ENCODE measurements at regions of chr22 and their contacts with region 1.

Region 1: GRCh38 chr22:22855617-22856308 is 31.9 kb upstream of the IGLL5 start:
- H3K4me3 ChIP-seq: no peak overlapping the region
- H3K27ac ChIP-seq: no peak overlapping the region
- H3K4me1 ChIP-seq: no peaks in the 10 kb centered on the region
- CTCF ChIP-seq: peak; percentile 77

Region 2: GRCh38 chr22:22552630-22553029 is 303.1 kb before region 1 on chr22:
- CTCF ChIA-PET with region 1: no interaction called
- POLR2A ChIA-PET with region 1: no interaction called
- H3K4me3 ChIP-seq: no peak overlapping the region
- H3K27ac ChIP-seq: no peak overlapping the region
- H3K4me1 ChIP-seq: no peaks in the 10 kb centered on the region
- CTCF ChIP-seq: peak; percentile 36; the same call in 1 of the 2 replicates

Region 3: GRCh38 chr22:22871516-22872278 is 15.9 kb after region 1 on chr22:
- CTCF ChIA-PET with region 1: interaction called, 32 read pairs
- POLR2A ChIA-PET with region 1: no interaction called
- H3K4me3 ChIP-seq: no peak overlapping the region
- H3K27ac ChIP-seq: no peak overlapping the region
- H3K4me1 ChIP-seq: no peaks in the 10 kb centered on the region
- CTCF ChIP-seq: no peak

Region 4: GRCh38 chr22:22877523-22878210 is 21.9 kb after region 1 on chr22:
- CTCF ChIA-PET with region 1: interaction called, 107 read pairs
- POLR2A ChIA-PET with region 1: no interaction called
- H3K4me3 ChIP-seq: no peak overlapping the region
- H3K27ac ChIP-seq: no peak overlapping the region
- H3K4me1 ChIP-seq: no peaks in the 10 kb centered on the region
- CTCF ChIP-seq: peak; percentile 32; the same call in 1 of the 2 replicates

Region 5: GRCh38 chr22:22942511-22943329 is 87.0 kb after region 1 on chr22:
- CTCF ChIA-PET with region 1: interaction called, 10 read pairs
- POLR2A ChIA-PET with region 1: no interaction called
- H3K4me3 ChIP-seq: no peak overlapping the region
- H3K27ac ChIP-seq: no peak overlapping the region
- H3K4me1 ChIP-seq: no peaks in the 10 kb centered on the region
- CTCF ChIP-seq: peak; percentile 89

Measured in HEK293 (cell line).